ENCODE measurements at regions of chr5 and their contacts with region 1.

Region 1: DNA sequence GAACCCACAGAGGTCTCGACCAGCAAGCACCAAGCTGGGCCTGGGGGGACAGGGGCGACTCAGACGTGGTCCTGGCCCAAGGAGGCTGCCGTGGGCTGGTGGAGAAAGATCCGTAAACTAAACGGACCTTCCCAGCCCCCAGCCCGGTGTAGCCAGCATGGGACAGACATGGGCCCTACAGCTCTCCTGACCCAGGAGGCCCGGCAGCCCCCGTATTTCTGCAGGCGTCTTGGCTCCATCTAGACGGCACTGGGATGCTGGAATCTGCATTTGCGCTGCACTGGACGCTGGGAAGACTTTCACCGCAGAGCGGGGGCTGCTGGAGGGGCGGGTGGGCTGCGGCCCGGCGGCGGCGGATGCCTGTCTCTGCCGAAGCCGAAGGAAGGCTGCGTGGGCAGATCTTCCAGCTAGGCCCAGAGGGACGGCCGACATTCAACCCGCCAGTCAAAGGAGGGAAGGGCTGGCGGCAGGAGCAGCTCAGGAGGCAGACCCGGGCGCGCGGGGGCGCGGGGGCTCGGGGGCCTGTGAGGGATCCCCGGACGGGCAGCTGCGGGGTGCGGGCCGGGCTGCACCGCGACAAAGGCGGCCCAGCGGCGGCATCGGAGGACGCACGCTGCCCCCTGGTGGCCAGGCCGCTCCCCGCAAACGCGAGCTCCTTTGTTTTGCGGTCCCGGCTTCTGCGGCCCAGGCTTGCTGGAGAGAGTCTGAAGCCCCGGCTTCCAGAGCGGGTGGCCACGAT is 266.2 kb downstream of the NSG2 start:
- DNase-seq: peak; percentile 76
- H3K27ac ChIP-seq: no peak overlapping the region
- CTCF ChIP-seq: peak; percentile 93

Region 2: GRCh38 chr5:174045470-174046025 is 266.2 kb before region 1 on chr5 and contains the start of gene NSG2:
- CTCF ChIA-PET with region 1: interaction called, 54 read pairs
- POLR2A ChIA-PET with region 1: no interaction called
- DNase-seq: peak; percentile 93
- H3K27ac ChIP-seq: no peak within 1 kb of the TSS
- CTCF ChIP-seq: peak; percentile 78

Region 3: DNA sequence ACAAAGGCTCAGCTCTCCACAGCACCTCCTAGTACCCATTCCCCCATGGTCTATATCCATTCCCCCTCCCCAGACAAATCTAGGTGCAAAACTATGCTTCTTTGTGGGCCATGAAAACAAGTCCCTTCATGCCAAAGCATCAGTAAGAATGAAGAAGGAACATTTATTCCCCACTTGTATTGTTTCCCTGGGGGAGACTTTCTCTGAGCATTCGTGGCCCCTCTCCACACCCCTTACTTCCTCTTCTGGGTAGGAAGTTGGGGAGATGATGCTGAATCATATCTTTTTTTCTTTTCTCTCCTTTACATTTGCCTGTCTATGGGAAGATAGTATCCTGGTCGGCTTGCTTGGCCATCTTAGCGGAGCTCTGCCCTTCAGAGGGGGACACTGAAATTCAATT is 19.4 kb before region 1 on chr5:
- CTCF ChIA-PET with region 1: interaction called, 11 read pairs
- POLR2A ChIA-PET with region 1: no interaction called
- DNase-seq: no peak
- H3K27ac ChIP-seq: no peak overlapping the region
- CTCF ChIP-seq: no peak